B cell (primary cell): ENCODE measurements at regions of chr11 and their contacts with region 1.

Region 1: GRCh38 chr11:121292495-121293287 is at the start of gene SC5D:
- DNase-seq: peak; percentile 97
- ATAC-seq: peak; percentile 82
- H3K4me3 ChIP-seq: peak within 1 kb of the TSS; percentile 69 to 96 (median 89)
- H3K4me3 Mint-ChIP-seq: peak within 1 kb of the TSS; percentile 94
- H3K27ac ChIP-seq: peak within 1 kb of the TSS; percentile 93
- H3K27ac Mint-ChIP-seq: peak within 1 kb of the TSS; percentile 97
- H3K4me1 ChIP-seq: peaks cover 9 to 12% of the 10 kb centered on the region in 2 donors
- H3K4me1 Mint-ChIP-seq: peaks cover 55% of the 10 kb centered on the region
- H3K27me3 ChIP-seq: no peaks in the 10 kb centered on the region
- H3K27me3 Mint-ChIP-seq: no peaks in the 10 kb centered on the region
- CTCF ChIP-seq: no peak
- total RNA-seq, gene SC5D: 54.3 and 54.8 TPM in 2 replicates

Region 2: GRCh38 chr11:120335908-120336640 is 956.6 kb before region 1 on chr11 and contains the start of gene ARHGEF12:
- CTCF ChIA-PET with region 1: no interaction called
- POLR2A ChIA-PET with region 1: no interaction called
- intact Hi-C with region 1: loop called (anchors 10 kb)
- DNase-seq: peak; percentile 91
- ATAC-seq: peak; percentile 70
- H3K4me3 ChIP-seq: peak within 1 kb of the TSS; percentile 42 to 77 (median 75)
- H3K4me3 Mint-ChIP-seq: peak within 1 kb of the TSS; percentile 93
- H3K27ac ChIP-seq: peak within 1 kb of the TSS; percentile 44 to 56
- H3K27ac Mint-ChIP-seq: peak within 1 kb of the TSS; percentile 91
- H3K4me1 ChIP-seq: peaks cover 22 to 35% of the 10 kb centered on the region in 2 donors
- H3K4me1 Mint-ChIP-seq: peaks cover 35% of the 10 kb centered on the region
- H3K27me3 ChIP-seq: peaks cover 0 to 46% (median 35%) of the 10 kb centered on the region in 4 experiments
- H3K27me3 Mint-ChIP-seq: peaks cover 46% of the 10 kb centered on the region
- CTCF ChIP-seq: no peak
- total RNA-seq, gene ARHGEF12: 21.6 and 23.8 TPM in 2 replicates

Region 3: GRCh38 chr11:121236115-121237001 is 56.3 kb before region 1 on chr11:
- CTCF ChIA-PET with region 1: no interaction called
- POLR2A ChIA-PET with region 1: no interaction called
- intact Hi-C with region 1: loop called (anchors 1 kb)
- DNase-seq: no peak
- ATAC-seq: no peak
- H3K4me3 ChIP-seq: peak overlapping the region in 1 of 5 experiments; percentile 57
- H3K4me3 Mint-ChIP-seq: peak overlapping the region; percentile 82
- H3K27ac ChIP-seq: no peak overlapping the region
- H3K27ac Mint-ChIP-seq: peak overlapping the region; percentile 69
- H3K4me1 ChIP-seq: peaks cover 7 to 24% of the 10 kb centered on the region in 2 donors
- H3K4me1 Mint-ChIP-seq: peaks cover 24% of the 10 kb centered on the region
- H3K27me3 ChIP-seq: peaks cover 0 to 16% (median 3%) of the 10 kb centered on the region in 4 experiments
- H3K27me3 Mint-ChIP-seq: peaks cover 12% of the 10 kb centered on the region
- CTCF ChIP-seq: no peak

Region 4: GRCh38 chr11:121249039-121249663 is 43.5 kb before region 1 on chr11:
- CTCF ChIA-PET with region 1: interaction called, 11 read pairs
- POLR2A ChIA-PET with region 1: no interaction called
- intact Hi-C with region 1: loop called (anchors 1 kb)
- DNase-seq: peak; percentile 58
- ATAC-seq: peak; percentile 56
- H3K4me3 ChIP-seq: no peak overlapping the region
- H3K4me3 Mint-ChIP-seq: no peak overlapping the region
- H3K27ac ChIP-seq: no peak overlapping the region
- H3K27ac Mint-ChIP-seq: no peak overlapping the region
- H3K4me1 ChIP-seq: no peaks in the 10 kb centered on the region
- H3K4me1 Mint-ChIP-seq: peaks cover 3% of the 10 kb centered on the region
- H3K27me3 ChIP-seq: peaks cover 0 to 3% (median 0%) of the 10 kb centered on the region in 4 experiments
- H3K27me3 Mint-ChIP-seq: no peaks in the 10 kb centered on the region
- CTCF ChIP-seq: peak; percentile 81

Region 5: GRCh38 chr11:121421159-121421901 is 128.6 kb after region 1 on chr11:
- CTCF ChIA-PET with region 1: no interaction called
- POLR2A ChIA-PET with region 1: no interaction called
- intact Hi-C with region 1: loop called (anchors 5 kb)
- DNase-seq: no peak
- ATAC-seq: no peak
- H3K4me3 ChIP-seq: no peak overlapping the region
- H3K4me3 Mint-ChIP-seq: peak overlapping the region; percentile 24
- H3K27ac ChIP-seq: peak overlapping the region in 1 of 2 donors; percentile 67
- H3K27ac Mint-ChIP-seq: peak overlapping the region; percentile 0
- H3K4me1 ChIP-seq: peaks cover 49 to 50% of the 10 kb centered on the region in 2 donors
- H3K4me1 Mint-ChIP-seq: peaks cover 74% of the 10 kb centered on the region
- H3K27me3 ChIP-seq: no peaks in the 10 kb centered on the region
- H3K27me3 Mint-ChIP-seq: no peaks in the 10 kb centered on the region
- CTCF ChIP-seq: no peak

Region 6: DNA sequence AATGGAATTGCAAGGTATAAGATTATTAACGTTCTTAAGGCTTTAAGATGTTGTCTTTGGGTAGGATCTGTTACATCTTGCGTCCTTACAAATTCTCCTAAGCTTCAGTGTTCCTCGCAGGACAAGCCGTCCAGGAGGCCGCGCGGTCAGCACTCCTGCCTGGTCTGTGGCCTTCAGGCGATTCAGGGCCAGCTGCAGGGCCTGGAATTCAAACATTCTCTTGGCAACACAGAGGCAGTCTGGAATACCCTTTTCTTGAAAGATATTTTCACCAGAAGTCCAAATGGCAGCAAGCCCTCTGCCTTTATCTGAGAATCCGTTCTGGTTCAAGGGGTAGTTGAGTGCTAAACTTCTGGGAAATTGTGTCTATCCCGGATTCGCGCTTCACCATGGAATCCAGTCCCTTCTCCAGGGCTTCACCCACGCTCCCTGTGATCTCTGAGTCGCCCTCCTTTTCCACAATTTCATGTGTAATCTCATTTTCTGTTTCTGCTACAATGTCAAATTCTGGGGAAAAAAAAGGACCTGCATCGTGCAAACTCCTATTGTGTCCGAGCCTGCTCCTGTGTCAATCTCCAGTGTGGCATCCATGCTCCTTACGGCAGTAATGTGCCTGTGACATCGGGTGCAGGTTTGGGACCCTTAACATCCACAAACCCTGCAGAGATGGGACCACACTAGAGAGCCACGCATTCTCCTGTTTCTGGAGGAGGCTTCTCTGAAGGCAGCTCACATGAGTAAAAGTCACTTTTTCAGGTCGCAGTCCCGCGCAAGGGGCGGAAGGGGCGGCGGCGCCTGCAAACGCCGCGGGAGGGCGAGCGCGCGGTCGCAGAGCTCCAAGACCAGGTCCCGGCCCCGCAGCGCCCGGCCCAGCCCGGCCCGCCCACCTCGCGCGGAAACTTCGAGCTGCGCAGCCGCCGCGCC is 134.0 kb after region 1 on chr11:
- CTCF ChIA-PET with region 1: interaction called, 3 read pairs
- POLR2A ChIA-PET with region 1: interaction called, 3 read pairs
- intact Hi-C with region 1: loop called (anchors 1 kb)
- DNase-seq: peak; percentile 77
- ATAC-seq: peak; percentile 48
- H3K4me3 ChIP-seq: peak overlapping the region in 4 of 5 experiments; percentile 25 to 54 (median 43)
- H3K4me3 Mint-ChIP-seq: peak overlapping the region; percentile 77
- H3K27ac ChIP-seq: no peak overlapping the region
- H3K27ac Mint-ChIP-seq: peak overlapping the region; percentile 64
- H3K4me1 ChIP-seq: peaks cover 52 to 63% of the 10 kb centered on the region in 2 donors
- H3K4me1 Mint-ChIP-seq: peaks cover 78% of the 10 kb centered on the region
- H3K27me3 ChIP-seq: no peaks in the 10 kb centered on the region
- H3K27me3 Mint-ChIP-seq: no peaks in the 10 kb centered on the region
- CTCF ChIP-seq: peak; percentile 22

Region 7: GRCh38 chr11:121570453-121570852 is 277.8 kb after region 1 on chr11:
- CTCF ChIA-PET with region 1: no interaction called
- POLR2A ChIA-PET with region 1: interaction called, 4 read pairs
- intact Hi-C with region 1: loop called (anchors 1 kb)
- DNase-seq: peak; percentile 19
- ATAC-seq: no peak
- H3K4me3 ChIP-seq: no peak overlapping the region
- H3K4me3 Mint-ChIP-seq: no peak overlapping the region
- H3K27ac ChIP-seq: peak overlapping the region in 1 of 2 donors; percentile 42
- H3K27ac Mint-ChIP-seq: no peak overlapping the region
- H3K4me1 ChIP-seq: peaks cover 8 to 38% of the 10 kb centered on the region in 2 donors
- H3K4me1 Mint-ChIP-seq: peaks cover 43% of the 10 kb centered on the region
- H3K27me3 ChIP-seq: peaks cover 0 to 19% (median 2%) of the 10 kb centered on the region in 4 experiments
- H3K27me3 Mint-ChIP-seq: peaks cover 21% of the 10 kb centered on the region
- CTCF ChIP-seq: no peak